ENCODE measurements at regions of chr12 and their contacts with region 1.

Region 1: DNA sequence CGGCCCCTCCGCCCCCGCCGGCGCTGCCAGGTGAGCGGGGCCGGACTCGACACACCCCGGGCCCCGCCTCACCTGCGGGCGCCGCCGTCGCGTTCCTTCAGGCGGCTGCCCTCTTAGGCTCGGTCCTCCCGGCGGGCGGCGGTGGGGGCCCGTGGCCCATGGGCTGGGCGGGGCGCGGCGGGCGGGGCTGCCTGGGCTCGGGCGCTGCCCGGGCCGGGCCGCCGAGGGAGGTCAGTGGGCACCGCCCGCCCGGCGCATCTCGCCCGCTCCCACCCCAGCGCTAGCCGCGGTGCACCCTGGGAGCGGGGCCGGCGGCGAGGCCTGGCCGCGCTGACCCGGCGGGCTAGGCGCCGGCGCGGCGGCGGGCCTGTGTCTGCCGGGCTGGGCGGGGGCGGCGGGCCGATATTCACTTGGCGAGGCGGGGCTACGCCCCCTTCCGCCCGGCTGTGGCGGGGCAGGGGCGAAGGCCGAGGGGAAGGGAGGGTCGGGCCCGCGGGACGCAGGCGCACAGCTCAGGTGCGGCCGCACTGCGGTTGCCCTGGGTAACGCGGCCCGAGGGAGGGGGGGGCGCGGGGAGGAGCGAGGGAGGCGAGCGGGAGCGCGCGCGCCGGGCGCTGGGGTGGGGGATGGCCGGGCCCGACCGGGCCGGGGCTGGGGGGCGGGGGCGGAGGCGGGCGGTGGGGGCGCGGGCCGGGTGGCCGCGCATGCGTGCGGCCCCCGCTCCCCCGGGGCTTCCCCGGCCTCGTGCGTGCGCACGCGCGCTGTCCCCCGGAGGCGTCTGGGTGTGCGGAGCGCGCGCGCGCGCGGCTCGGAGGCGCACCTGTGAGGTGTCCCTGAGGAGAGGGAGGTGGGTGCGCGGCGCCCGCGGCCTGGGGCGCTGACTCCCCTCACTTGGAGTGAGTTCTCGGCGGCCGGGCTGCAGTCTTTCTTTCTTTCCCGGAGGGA is at the starts of genes CCDC92 and ZNF664:
- DNase-seq: peak; percentile 95
- H3K4me3 ChIP-seq: peak within 1 kb of the TSS; percentile 83 to 98 (median 94)
- H3K27ac ChIP-seq: peak within 1 kb of the TSS; percentile 92 to 97 (median 94)
- H3K4me1 ChIP-seq: peaks cover 0 to 28% (median 21%) of the 10 kb centered on the region in 4 donors
- H3K27me3 ChIP-seq: no peaks in the 10 kb centered on the region
- CTCF ChIP-seq: no peak
- EP300 ChIP-seq: no peak
- POLR2A ChIP-seq: no peak
- total RNA-seq, gene CCDC92: 20.7 to 54.0 (median 29.1) TPM
- total RNA-seq, gene ZNF664: 43.4 to 71.7 (median 57.2) TPM

Region 2: GRCh38 chr12:123713398-123713797 is 259.3 kb before region 1 on chr12:
- intact Hi-C with region 1: loop called (anchors 5 kb)
- DNase-seq: no peak
- H3K4me3 ChIP-seq: peak overlapping the region in 3 of 4 donors; percentile 93 to 100 (median 94)
- H3K27ac ChIP-seq: no peak overlapping the region
- H3K4me1 ChIP-seq: peaks cover 0 to 25% (median 23%) of the 10 kb centered on the region in 4 donors
- H3K27me3 ChIP-seq: no peaks in the 10 kb centered on the region
- CTCF ChIP-seq: no peak
- EP300 ChIP-seq: no peak
- POLR2A ChIP-seq: no peak